Left colon (tissue), 2 donors: ENCODE measurements at regions of chr17 and their contacts with region 1.

Region 1: DNA sequence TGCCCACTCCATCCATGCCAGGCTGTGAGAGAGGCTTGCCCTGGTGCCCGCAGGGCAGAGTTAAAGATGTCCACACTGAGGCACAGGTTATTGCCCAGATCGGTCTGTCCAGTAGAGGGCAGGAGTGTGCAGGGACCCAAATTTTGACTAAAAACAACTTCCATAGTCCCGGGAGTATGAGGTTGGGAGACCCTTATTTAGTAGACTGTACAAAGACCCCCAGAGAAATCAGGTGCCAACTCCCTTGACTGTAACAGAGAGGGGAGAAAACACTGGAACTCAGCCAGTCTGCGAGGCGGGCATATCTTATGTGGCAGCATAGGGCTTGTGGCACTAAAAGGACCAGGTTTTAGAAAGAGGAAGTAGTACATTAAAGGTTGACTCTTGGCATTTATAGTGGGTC is 43.4 kb downstream of the HNF1B start:
- DNase-seq: peak in 1 of 2 donors; percentile 64
- ATAC-seq: peak; percentile 56

Region 2: GRCh38 chr17:37283414-37283961 is 418.0 kb before region 1 on chr17:
- intact Hi-C with region 1: no loop called
- DNase-seq: no peak
- ATAC-seq: no peak

Region 3: DNA sequence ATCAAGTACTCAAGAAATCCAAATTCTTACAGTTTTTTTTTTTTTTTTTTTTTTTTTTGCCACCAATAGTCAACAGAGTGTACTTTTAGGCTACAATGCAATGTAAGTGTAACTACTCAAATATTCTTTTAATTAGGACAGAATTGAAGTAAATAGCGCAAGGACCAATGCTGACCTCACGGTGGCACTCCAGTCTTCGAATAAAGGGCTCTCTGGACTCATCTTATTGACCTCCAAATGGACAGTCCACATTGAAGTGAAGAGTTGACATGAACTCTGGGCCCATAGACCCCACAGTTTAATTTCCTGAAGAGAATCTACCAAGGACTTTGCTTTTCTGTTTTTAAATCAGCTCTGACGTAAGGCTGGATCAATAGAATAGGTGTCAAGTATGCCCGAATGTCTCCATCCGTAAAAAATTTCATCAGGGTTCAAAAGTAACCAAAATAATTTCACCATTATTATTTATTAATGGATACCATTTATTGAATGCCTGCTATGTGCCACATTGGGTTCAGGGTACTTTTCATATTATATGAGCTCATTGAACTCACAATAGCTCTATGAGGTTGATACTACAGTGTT is 51.0 kb before region 1 on chr17:
- intact Hi-C with region 1: loop called in 1 of 2 experiments (anchors 5 kb)
- DNase-seq: peak in 1 of 2 donors; percentile 41
- ATAC-seq: peak; percentile 85